ENCODE measurements at regions of chr19 and their contacts with region 1.

Region 1: DNA sequence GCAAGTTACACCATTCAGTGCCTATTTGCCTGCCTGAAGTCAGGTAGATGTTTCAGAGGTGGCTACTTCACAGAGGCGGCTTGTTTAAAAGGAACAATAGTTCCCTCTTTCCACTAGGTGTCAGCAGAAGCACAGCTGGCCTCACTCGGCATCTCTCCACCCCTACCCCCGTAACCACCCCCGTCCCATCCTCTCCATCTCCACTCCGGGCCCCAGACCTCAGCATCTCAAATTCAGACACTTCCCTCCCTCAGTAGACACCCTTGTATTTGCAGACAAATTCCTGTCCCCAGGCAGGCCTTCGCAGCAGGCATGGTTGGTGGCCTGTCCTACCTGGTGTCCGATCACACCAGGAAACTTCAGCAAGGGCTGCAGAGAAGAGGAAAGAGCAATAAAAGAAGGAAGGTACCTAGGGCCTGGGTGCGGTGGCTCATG is 9.1 kb upstream of the DPP9 start:
- DNase-seq: peak; percentile 40 to 45
- ATAC-seq: peak; percentile 96

Region 2: DNA sequence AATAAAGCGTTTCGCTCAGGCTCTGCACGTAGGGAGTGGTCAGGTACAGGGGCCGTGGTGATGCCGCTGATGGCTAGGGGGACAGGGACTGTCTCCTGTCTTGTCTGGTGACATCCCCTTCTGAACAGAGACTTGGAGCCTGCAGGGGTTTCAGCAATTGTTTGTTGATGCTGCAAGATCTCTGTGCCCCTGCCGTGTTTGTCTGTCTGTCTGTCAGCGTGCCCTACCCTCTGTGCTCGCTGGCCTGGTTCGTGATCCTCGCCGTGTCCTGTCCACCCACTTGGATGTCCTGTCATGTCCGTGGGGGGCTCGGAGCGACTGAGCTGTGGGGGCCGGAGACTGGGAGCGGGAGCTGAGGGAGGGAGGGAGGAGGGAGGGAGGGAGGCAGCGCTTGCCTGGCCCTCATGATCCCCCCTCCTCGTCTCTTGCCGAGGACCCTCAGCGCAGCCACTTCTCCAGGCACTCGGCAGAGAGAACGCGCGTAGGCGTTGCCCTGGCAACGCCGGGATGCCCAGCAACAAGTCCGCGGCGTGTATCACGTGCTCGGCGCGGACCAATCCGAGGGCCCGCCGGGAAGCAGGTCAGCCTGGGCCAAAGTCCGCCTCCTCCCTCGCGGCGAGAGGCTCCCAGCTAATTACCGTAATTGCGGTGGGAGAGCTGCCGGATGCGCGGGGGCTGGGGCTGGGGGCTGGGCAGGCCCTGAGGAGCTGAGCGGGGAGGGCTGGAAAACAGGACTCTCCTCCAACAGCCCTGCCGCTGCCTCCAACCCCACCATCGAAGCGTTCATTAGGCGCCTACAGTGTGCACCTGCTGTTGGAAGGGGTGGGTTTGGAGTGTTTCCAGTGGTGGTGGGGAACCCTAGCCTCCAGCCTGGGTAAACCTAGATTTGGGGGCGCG is 26.9 kb after region 1 on chr19:
- intact Hi-C with region 1: no loop called
- DNase-seq: peak; percentile 92 to 94
- ATAC-seq: peak; percentile 100

Region 3: DNA sequence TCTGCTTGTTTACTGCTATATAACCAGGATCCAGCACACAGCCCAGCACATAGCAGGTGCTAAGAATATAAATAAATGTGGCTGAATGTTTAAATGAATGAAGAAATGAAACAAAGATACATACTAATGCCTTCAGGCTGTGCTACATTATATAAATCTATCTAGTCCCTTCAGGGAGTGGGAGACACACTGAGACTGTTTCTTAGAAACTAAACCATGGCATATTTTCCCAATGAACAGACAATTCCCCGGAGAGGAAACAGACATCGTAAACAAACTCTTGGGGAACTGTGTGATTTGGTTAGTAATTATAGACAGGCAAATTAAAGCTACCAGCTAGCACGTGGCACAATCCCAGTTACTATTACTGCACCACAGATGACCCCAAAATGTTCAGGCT is 49.1 kb after region 1 on chr19:
- intact Hi-C with region 1: loop called (anchors 5 to 10 kb)
- DNase-seq: no peak
- ATAC-seq: no peak

Region 4: DNA sequence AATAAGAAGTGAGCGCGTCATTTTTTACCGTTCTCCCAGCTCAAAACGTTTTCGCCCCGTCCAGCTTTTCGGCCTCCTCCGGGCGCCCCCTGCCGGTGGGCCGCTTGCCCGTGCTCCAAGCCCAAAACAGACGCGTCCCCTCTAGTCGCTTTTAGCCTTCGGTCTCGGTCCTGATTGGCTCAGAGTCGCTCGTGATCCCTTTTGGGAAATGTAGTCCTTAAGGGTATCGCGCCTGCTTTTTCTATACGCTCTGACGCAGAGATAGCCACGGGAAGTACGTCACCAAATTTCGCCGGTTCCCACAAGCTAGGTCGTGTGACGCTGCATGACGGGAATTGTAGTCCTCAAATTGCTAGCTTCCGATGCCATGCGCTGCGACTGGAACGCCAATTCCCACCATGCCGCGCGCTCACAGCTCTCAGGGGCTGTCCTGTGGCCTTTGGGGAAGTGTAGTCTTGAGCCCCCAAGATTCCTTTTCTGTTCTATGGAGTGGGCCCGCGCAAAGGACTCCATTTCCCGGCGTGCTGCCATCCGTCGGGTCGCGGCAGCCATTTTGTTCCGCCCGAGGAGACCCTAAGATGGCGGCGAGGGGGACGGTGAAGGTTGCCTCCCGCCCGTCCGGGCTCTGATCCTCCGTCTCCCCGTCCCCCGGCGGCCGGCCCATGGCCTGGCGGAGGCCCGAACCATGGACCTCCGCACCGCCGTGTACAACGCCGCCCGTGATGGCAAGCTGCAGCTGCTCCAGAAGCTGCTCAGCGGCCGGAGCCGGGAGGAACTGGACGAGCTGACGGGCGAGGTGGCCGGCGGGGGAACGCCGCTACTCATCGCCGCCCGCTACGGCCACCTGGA is 58.7 kb after region 1 on chr19 and contains the start of gene FEM1A:
- intact Hi-C with region 1: loop called (anchors 5 to 10 kb)
- DNase-seq: peak; percentile 98 to 100
- ATAC-seq: peak; percentile 95
- total RNA-seq, gene FEM1A: 10.9 to 11.2 TPM

Region 5: GRCh38 chr19:4803736-4804695 is 71.3 kb after region 1 on chr19:
- intact Hi-C with region 1: loop called in 1 of 2 experiments (anchors 5 kb)
- DNase-seq: peak in 1 of 2 donors; percentile 66
- ATAC-seq: peak; percentile 76

Measured in left colon (tissue), 2 donors.